ENCODE measurements at regions of chr10 and their contacts with region 1.

Region 1: DNA sequence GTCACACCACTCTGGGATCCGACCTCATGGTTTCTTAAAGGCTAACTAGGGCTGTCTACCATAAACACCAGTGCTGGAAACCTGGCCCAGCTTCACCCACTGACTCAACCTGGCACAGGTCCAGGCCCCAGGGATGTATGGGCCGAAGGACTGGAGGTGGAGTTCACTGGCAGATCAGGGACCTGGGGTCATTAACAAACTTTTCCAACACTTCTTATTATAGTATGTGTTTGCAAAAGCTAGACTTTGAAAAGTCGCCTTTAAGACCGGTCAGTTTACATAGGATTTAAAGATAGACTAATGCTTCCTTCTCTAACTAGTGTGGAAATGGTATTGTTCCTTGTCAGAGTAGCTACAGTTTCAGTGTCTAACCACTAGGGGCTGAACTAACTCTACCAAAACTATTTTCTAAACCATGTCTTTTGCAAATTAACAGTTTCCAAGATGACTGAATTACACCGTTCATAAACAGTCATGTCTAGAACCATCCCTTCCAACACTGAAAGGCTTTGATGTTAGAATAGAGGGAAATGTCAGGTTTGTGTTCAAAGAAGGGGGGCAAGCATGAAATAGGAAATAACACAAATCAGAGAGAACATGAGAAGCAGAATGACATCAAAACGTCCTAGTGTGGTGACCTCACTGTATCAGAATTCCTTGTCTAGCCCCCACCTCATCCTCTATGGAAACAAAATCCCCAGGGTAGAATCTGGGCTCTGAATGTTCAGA is 29.7 kb downstream of the STN1 start:
- DNase-seq: peak in 3 of 9 experiments; percentile 15 to 75 (median 61)
- ATAC-seq: peak; percentile 92
- H3K4me3 ChIP-seq: no peak overlapping the region
- H3K4me3 Mint-ChIP-seq: no peak overlapping the region
- H3K27ac ChIP-seq: no peak overlapping the region
- H3K27ac Mint-ChIP-seq: peak overlapping the region; percentile 65
- H3K4me1 ChIP-seq: peaks cover 12% of the 10 kb centered on the region
- H3K4me1 Mint-ChIP-seq: peaks cover 23% of the 10 kb centered on the region
- H3K27me3 ChIP-seq: no peaks in the 10 kb centered on the region
- H3K27me3 Mint-ChIP-seq: no peaks in the 10 kb centered on the region
- CTCF ChIP-seq: peak; percentile 83

Region 2: DNA sequence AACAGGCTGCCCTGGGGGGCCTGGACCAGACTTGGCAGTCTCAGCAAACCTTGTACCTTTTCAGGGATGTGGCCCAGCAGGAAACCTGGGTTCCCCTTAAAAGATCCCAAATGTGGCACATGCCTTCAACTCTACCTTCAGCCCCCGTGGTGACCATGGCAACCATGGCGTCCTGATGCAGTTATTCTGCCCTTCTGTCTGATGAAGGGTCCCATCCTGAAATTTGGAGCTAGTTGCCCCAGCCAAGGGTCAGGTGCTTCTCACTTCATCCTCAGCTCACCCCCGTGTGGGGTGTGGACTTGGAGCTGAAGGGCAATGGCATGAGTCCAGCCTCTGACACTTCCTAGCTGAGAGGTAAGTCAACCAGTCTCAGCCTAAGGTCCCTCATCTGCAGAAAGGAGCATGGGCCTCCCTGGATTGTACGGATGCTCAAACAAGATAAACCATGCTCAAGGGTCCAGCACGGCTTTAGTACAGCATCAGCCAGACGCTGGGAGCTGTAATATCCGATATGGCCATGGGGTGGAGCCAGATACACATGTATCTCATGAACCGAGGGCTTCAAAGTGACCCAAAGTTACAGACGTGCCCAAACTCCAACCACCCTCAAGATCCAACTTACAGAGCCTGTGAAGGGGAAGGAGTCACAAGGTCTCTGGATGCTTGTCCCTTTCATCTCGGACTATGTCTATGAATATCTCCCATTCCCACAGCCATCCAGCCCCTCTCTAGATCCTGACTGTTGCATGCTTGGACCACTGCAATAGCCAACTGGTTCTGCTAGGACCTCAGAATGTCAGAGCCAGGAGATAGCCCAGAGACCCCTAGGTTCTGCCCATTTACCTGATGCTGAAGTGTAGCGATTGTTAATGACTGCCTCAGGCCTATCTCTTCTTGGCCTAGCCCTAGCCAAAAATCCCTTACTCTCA is 175.4 kb before region 1 on chr10:
- CTCF ChIA-PET with region 1: interaction called, 48 read pairs
- POLR2A ChIA-PET with region 1: no interaction called
- intact Hi-C with region 1: loop called (anchors 1 kb)
- DNase-seq: peak; percentile 68 to 88 (median 80)
- ATAC-seq: peak; percentile 97
- H3K4me3 ChIP-seq: no peak overlapping the region
- H3K4me3 Mint-ChIP-seq: no peak overlapping the region
- H3K27ac ChIP-seq: no peak overlapping the region
- H3K27ac Mint-ChIP-seq: no peak overlapping the region
- H3K4me1 ChIP-seq: no peaks in the 10 kb centered on the region
- H3K4me1 Mint-ChIP-seq: no peaks in the 10 kb centered on the region
- H3K27me3 ChIP-seq: no peaks in the 10 kb centered on the region
- H3K27me3 Mint-ChIP-seq: no peaks in the 10 kb centered on the region
- CTCF ChIP-seq: peak; percentile 92

Region 3: GRCh38 chr10:103966671-103967447 is 78.6 kb after region 1 on chr10 and contains the start of gene SLK:
- CTCF ChIA-PET with region 1: interaction called, 4 read pairs
- POLR2A ChIA-PET with region 1: interaction called, 3 read pairs
- intact Hi-C with region 1: loop called (anchors 2 kb)
- DNase-seq: peak; percentile 72 to 95 (median 84)
- ATAC-seq: peak; percentile 83
- H3K4me3 ChIP-seq: peak within 1 kb of the TSS; percentile 96 to 97
- H3K4me3 Mint-ChIP-seq: peak within 1 kb of the TSS; percentile 96
- H3K27ac ChIP-seq: peak within 1 kb of the TSS; percentile 83 to 86
- H3K27ac Mint-ChIP-seq: peak within 1 kb of the TSS; percentile 89
- H3K4me1 ChIP-seq: peaks cover 14% of the 10 kb centered on the region
- H3K4me1 Mint-ChIP-seq: peaks cover 44% of the 10 kb centered on the region
- H3K27me3 ChIP-seq: no peaks in the 10 kb centered on the region
- H3K27me3 Mint-ChIP-seq: no peaks in the 10 kb centered on the region
- CTCF ChIP-seq: no peak
- total RNA-seq, gene SLK: 23.8 to 24.6 TPM

Region 4: DNA sequence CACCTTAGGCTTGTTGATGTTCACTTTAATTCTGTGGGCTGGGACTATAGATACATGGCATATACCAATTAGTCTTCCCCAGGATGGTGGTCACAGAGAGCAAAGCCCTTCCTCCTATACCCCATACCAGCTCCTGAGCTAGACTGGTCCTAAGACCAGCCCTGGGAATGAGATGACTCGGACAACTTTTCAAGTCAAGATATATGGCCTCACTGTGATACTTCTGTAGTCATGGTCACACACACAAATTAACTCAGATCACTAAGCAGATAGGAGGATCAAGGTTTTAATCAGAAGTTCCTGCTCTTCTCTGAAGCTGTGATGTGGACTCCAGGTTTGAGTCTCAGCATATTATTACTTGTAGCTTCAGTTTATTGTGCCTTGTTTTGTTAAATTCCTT is 131.7 kb after region 1 on chr10:
- CTCF ChIA-PET with region 1: interaction called, 10 read pairs
- POLR2A ChIA-PET with region 1: interaction called, 3 read pairs
- intact Hi-C with region 1: loop called in 1 of 2 experiments (anchors 5 kb)
- DNase-seq: no peak
- ATAC-seq: no peak
- H3K4me3 ChIP-seq: no peak overlapping the region
- H3K4me3 Mint-ChIP-seq: no peak overlapping the region
- H3K27ac ChIP-seq: no peak overlapping the region
- H3K27ac Mint-ChIP-seq: no peak overlapping the region
- H3K4me1 ChIP-seq: no peaks in the 10 kb centered on the region
- H3K4me1 Mint-ChIP-seq: peaks cover 2% of the 10 kb centered on the region
- H3K27me3 ChIP-seq: no peaks in the 10 kb centered on the region
- H3K27me3 Mint-ChIP-seq: no peaks in the 10 kb centered on the region
- CTCF ChIP-seq: no peak

Region 5: GRCh38 chr10:104121520-104122224 is 233.4 kb after region 1 on chr10 and contains the start of gene SFR1:
- CTCF ChIA-PET with region 1: interaction called, 19 read pairs
- POLR2A ChIA-PET with region 1: interaction called, 6 read pairs
- intact Hi-C with region 1: loop called (anchors 1 to 2 kb)
- DNase-seq: peak; percentile 98 to 100 (median 99)
- ATAC-seq: peak; percentile 90
- H3K4me3 ChIP-seq: peak within 1 kb of the TSS; percentile 95 to 98
- H3K4me3 Mint-ChIP-seq: peak within 1 kb of the TSS; percentile 95
- H3K27ac ChIP-seq: peak within 1 kb of the TSS; percentile 98 to 99
- H3K27ac Mint-ChIP-seq: peak within 1 kb of the TSS; percentile 99
- H3K4me1 ChIP-seq: peaks cover 19% of the 10 kb centered on the region
- H3K4me1 Mint-ChIP-seq: peaks cover 29% of the 10 kb centered on the region
- H3K27me3 ChIP-seq: no peaks in the 10 kb centered on the region
- H3K27me3 Mint-ChIP-seq: peaks cover 6% of the 10 kb centered on the region
- CTCF ChIP-seq: peak; percentile 50
- total RNA-seq, gene SFR1: 6.2 to 6.8 TPM

Region 6: GRCh38 chr10:104268716-104269645 is 380.7 kb after region 1 on chr10 and contains the start of gene GSTO2:
- CTCF ChIA-PET with region 1: interaction called, 3 read pairs
- POLR2A ChIA-PET with region 1: no interaction called
- intact Hi-C with region 1: loop called in 1 of 2 experiments (anchors 2 kb)
- DNase-seq: peak; percentile 94 to 99 (median 97)
- ATAC-seq: peak; percentile 89
- H3K4me3 ChIP-seq: peak within 1 kb of the TSS; percentile 81 to 82
- H3K4me3 Mint-ChIP-seq: peak within 1 kb of the TSS; percentile 94
- H3K27ac ChIP-seq: peak within 1 kb of the TSS; percentile 90 to 93
- H3K27ac Mint-ChIP-seq: peak within 1 kb of the TSS; percentile 96
- H3K4me1 ChIP-seq: peaks cover 26% of the 10 kb centered on the region
- H3K4me1 Mint-ChIP-seq: peaks cover 48% of the 10 kb centered on the region
- H3K27me3 ChIP-seq: no peaks in the 10 kb centered on the region
- H3K27me3 Mint-ChIP-seq: peaks cover 1% of the 10 kb centered on the region
- CTCF ChIP-seq: no peak
- total RNA-seq, gene GSTO2: 0.49 to 0.75 TPM